ENCODE measurements at regions of chr12 and their contacts with region 1.

Region 1: GRCh38 chr12:73677520-73678291 is 859.9 kb upstream of the ATXN7L3B start:
- DNase-seq: peak in 1 of 2 experiments; percentile 44
- H3K4me3 ChIP-seq: peak overlapping the region; percentile 5
- H3K27ac ChIP-seq: peak overlapping the region; percentile 59
- H3K4me1 ChIP-seq: peaks cover 25% of the 10 kb centered on the region
- H3K27me3 ChIP-seq: no peaks in the 10 kb centered on the region
- CTCF ChIP-seq: no peak

Region 2: GRCh38 chr12:73665193-73665592 is 12.5 kb before region 1 on chr12:
- CTCF ChIA-PET with region 1: no interaction called
- POLR2A ChIA-PET with region 1: no interaction called
- intact Hi-C with region 1: no loop called
- DNase-seq: no peak
- H3K4me3 ChIP-seq: no peak overlapping the region
- H3K27ac ChIP-seq: no peak overlapping the region
- H3K4me1 ChIP-seq: no peaks in the 10 kb centered on the region
- H3K27me3 ChIP-seq: no peaks in the 10 kb centered on the region
- CTCF ChIP-seq: no peak

Region 3: DNA sequence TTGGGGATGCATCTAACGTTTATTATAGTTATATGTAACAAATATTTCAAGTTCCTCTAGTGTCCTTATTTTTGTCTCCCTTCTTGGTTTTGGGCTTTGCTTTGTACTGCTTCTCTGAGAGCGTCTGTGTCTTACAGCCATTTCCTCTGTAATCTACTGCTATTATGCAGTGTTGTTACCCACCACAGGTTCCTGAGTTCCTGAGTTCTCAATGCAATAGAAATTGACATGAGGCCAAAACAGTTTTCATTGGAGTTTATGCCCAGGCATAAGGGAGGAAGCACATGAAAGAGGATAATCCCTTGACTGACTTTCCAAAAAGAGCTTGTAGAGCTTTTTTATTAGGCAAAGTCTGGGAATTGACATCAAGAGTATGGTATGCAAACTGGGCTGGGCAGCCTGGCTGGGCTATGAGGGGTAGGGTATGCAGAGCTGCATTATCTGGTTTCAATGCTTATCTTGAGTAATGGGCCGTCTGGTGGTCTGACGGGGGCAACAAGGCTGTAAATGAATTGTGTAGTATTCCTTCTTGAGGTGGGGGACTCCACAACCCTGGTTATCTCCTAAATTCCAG is 137.5 kb after region 1 on chr12:
- CTCF ChIA-PET with region 1: no interaction called
- POLR2A ChIA-PET with region 1: no interaction called
- intact Hi-C with region 1: no loop called
- DNase-seq: no peak
- H3K4me3 ChIP-seq: no peak overlapping the region
- H3K27ac ChIP-seq: no peak overlapping the region
- H3K4me1 ChIP-seq: no peaks in the 10 kb centered on the region
- H3K27me3 ChIP-seq: no peaks in the 10 kb centered on the region
- CTCF ChIP-seq: no peak

Region 4: GRCh38 chr12:74119811-74120362 is 442.2 kb after region 1 on chr12:
- CTCF ChIA-PET with region 1: no interaction called
- POLR2A ChIA-PET with region 1: interaction called, 10 read pairs
- intact Hi-C with region 1: no loop called
- DNase-seq: no peak
- H3K4me3 ChIP-seq: no peak overlapping the region
- H3K27ac ChIP-seq: no peak overlapping the region
- H3K4me1 ChIP-seq: peaks cover 8% of the 10 kb centered on the region; the same call in 1 of the 2 replicates
- H3K27me3 ChIP-seq: no peaks in the 10 kb centered on the region
- CTCF ChIP-seq: no peak

Measured in PC-9 (cell line).